ENCODE measurements at regions of chr12 and their contacts with region 1.

Region 1: GRCh38 chr12:49347384-49348237 is 923 bp downstream of the DNAJC22 start:
- DNase-seq: peak; percentile 97
- H3K4me3 ChIP-seq: peak overlapping the region; percentile 19 to 50
- H3K27ac ChIP-seq: no peak overlapping the region
- H3K4me1 ChIP-seq: peaks cover 15 to 38% of the 10 kb centered on the region in 2 experiments; a peak in 2 of 4 replicates
- H3K27me3 ChIP-seq: peaks cover 5% of the 10 kb centered on the region; the same call in 1 of the 2 replicates
- CTCF ChIP-seq: peak; percentile 95
- EP300 ChIP-seq: no peak
- RAD21 ChIP-seq: peak; percentile 34

Region 2: DNA sequence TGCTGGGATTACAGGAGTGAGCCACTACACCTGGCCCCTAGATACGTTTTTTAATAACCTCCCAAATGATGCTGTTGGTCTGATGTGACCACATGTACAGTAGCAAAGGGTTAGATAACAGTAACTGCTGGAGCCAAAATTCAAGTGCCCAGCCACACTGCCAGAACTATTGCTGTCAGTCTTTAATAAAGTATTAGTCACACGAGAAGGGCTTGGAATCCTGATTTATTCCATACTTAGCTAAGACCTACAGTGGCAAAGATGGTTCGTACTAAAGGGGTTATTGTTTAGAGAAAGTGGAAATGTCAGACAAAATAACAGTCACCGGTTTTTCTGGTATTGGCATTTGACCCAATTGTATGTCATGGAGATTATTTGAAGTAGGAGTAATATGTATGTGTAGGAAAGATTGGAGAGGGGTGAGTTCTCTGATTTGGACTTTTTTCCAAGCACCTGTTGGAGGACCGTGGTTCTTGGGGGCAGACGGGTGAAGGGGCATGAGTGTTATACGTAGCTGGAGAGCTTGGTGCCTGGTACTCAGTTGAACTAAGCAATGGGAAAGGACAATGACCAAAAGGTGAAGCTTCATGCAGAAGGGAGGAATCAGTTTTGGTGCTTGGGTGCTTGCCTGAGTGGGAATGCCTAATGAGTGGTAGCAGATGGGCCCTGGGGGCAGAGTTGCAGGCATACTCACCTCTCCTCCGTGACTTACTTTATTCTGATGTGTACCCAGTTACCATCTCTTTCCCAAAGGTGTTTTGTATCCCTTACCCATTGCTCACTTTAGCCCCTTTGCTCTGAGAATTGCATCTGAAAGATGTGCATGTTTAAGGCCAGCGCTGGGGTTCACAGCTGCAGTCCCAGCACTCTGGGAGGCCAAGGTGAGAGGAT is 73.0 kb before region 1 on chr12:
- CTCF ChIA-PET with region 1: interaction called, 658 read pairs
- POLR2A ChIA-PET with region 1: no interaction called
- DNase-seq: no peak
- H3K4me3 ChIP-seq: no peak overlapping the region
- H3K27ac ChIP-seq: no peak overlapping the region
- H3K4me1 ChIP-seq: peaks cover 6 to 15% of the 10 kb centered on the region in 2 experiments; a peak in 2 of 4 replicates
- H3K27me3 ChIP-seq: no peaks in the 10 kb centered on the region
- CTCF ChIP-seq: no peak
- EP300 ChIP-seq: no peak
- RAD21 ChIP-seq: no peak

Region 3: GRCh38 chr12:49288412-49288853 is 59.2 kb before region 1 on chr12:
- CTCF ChIA-PET with region 1: interaction called, 658 read pairs
- POLR2A ChIA-PET with region 1: interaction called, 7 read pairs
- DNase-seq: peak; percentile 76
- H3K4me3 ChIP-seq: no peak overlapping the region; a peak in 1 of 4 replicates
- H3K27ac ChIP-seq: no peak overlapping the region
- H3K4me1 ChIP-seq: peaks cover 6 to 18% of the 10 kb centered on the region in 2 experiments; a peak in 3 of 4 replicates
- H3K27me3 ChIP-seq: no peaks in the 10 kb centered on the region
- CTCF ChIP-seq: peak; percentile 92
- EP300 ChIP-seq: no peak
- RAD21 ChIP-seq: peak; percentile 87

Region 4: GRCh38 chr12:49336645-49337584 is 10.7 kb before region 1 on chr12 and contains the start of gene C1QL4:
- CTCF ChIA-PET with region 1: interaction called, 88 read pairs
- POLR2A ChIA-PET with region 1: interaction called, 3 read pairs
- DNase-seq: peak; percentile 99
- H3K4me3 ChIP-seq: peak within 1 kb of the TSS; percentile 69 to 97
- H3K27ac ChIP-seq: no peak within 1 kb of the TSS
- H3K4me1 ChIP-seq: peaks cover 0 to 9% of the 10 kb centered on the region in 2 experiments; a peak in 1 of 4 replicates
- H3K27me3 ChIP-seq: no peaks in the 10 kb centered on the region
- CTCF ChIP-seq: peak; percentile 84
- EP300 ChIP-seq: no peak
- RAD21 ChIP-seq: peak; percentile 52
- polyA plus RNA-seq, gene C1QL4: 9.8 and 14.6 TPM in 2 replicates

Region 5: GRCh38 chr12:49515266-49515665 is 167.7 kb after region 1 on chr12:
- CTCF ChIA-PET with region 1: interaction called, 74 read pairs
- POLR2A ChIA-PET with region 1: interaction called, 3 read pairs
- DNase-seq: no peak
- H3K4me3 ChIP-seq: no peak overlapping the region
- H3K27ac ChIP-seq: peak overlapping the region; percentile 43 to 67; a peak in 3 of 4 replicates
- H3K4me1 ChIP-seq: peaks cover 3 to 41% of the 10 kb centered on the region in 2 experiments; a peak in 3 of 4 replicates
- H3K27me3 ChIP-seq: no peaks in the 10 kb centered on the region
- CTCF ChIP-seq: no peak
- EP300 ChIP-seq: peak in 1 of 2 experiments; percentile 29; a peak in 1 of 4 replicates
- RAD21 ChIP-seq: no peak

Region 6: DNA sequence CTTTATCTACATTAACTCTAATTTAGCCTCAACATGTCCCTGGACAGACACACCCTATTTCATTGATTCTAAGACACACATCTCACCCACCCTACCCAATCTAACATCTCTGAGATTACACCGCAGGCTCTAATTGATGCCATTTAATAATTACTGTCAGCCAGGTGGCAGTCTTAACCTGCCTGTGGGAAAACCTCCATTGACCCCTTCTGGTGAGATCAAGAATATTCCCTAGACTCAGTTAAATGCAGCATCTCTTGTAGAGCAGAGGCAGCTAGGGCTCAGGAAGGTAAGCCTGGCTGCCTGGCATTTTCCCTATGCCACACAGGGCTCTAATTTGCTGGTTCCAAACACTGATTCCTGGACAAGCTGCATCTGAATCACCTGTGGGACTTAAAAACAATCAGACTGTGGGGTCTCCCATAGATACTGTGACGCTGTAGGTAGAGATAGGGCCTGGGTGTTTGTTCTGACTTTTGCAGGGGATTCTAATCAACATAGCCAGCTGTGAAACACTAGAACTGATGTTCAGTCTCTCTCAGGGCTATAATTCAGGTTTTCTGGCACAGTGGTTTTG is 206.0 kb after region 1 on chr12:
- CTCF ChIA-PET with region 1: interaction called, 15 read pairs
- POLR2A ChIA-PET with region 1: no interaction called
- DNase-seq: peak; percentile 73
- H3K4me3 ChIP-seq: no peak overlapping the region
- H3K27ac ChIP-seq: no peak overlapping the region
- H3K4me1 ChIP-seq: no peaks in the 10 kb centered on the region; a peak in 1 of 4 replicates
- H3K27me3 ChIP-seq: no peaks in the 10 kb centered on the region
- CTCF ChIP-seq: peak; percentile 58
- EP300 ChIP-seq: no peak
- RAD21 ChIP-seq: peak; percentile 66

Measured in SK-N-SH (cell line).